ENCODE measurements at regions of chr19 and their contacts with region 1.

Region 1: GRCh38 chr19:35247526-35248306 is 1.1 kb upstream of the LSR start:
- DNase-seq: peak; percentile 92
- H3K4me3 ChIP-seq: peak overlapping the region; percentile 82
- H3K27ac ChIP-seq: peak overlapping the region; percentile 69
- H3K4me1 ChIP-seq: peaks cover 21% of the 10 kb centered on the region
- CTCF ChIP-seq: peak; percentile 71

Region 2: GRCh38 chr19:35154525-35155406 is 93.0 kb before region 1 on chr19 and contains the start of gene FXYD5:
- CTCF ChIA-PET with region 1: no interaction called
- POLR2A ChIA-PET with region 1: no interaction called
- intact Hi-C with region 1: no loop called
- DNase-seq: peak; percentile 69
- H3K4me3 ChIP-seq: peak within 1 kb of the TSS; percentile 81
- H3K27ac ChIP-seq: peak within 1 kb of the TSS; percentile 51
- H3K4me1 ChIP-seq: peaks cover 24% of the 10 kb centered on the region
- CTCF ChIP-seq: no peak
- total RNA-seq, gene FXYD5: 76.8 and 82.1 TPM in 2 replicates

Region 3: GRCh38 chr19:35213663-35214632 is 33.8 kb before region 1 on chr19:
- CTCF ChIA-PET with region 1: no interaction called
- POLR2A ChIA-PET with region 1: no interaction called
- intact Hi-C with region 1: loop called (anchors 2 kb)
- DNase-seq: peak; percentile 93
- H3K4me3 ChIP-seq: peak overlapping the region; percentile 38
- H3K27ac ChIP-seq: peak overlapping the region; percentile 83
- H3K4me1 ChIP-seq: peaks cover 77% of the 10 kb centered on the region
- CTCF ChIP-seq: no peak

Region 4: GRCh38 chr19:35269421-35270117 is 21.9 kb after region 1 on chr19:
- CTCF ChIA-PET with region 1: no interaction called
- POLR2A ChIA-PET with region 1: no interaction called
- intact Hi-C with region 1: loop called (anchors 2 kb)
- DNase-seq: peak; percentile 90
- H3K4me3 ChIP-seq: peak overlapping the region; percentile 75
- H3K27ac ChIP-seq: peak overlapping the region; percentile 61
- H3K4me1 ChIP-seq: peaks cover 43% of the 10 kb centered on the region
- CTCF ChIP-seq: peak; percentile 73

Region 5: DNA sequence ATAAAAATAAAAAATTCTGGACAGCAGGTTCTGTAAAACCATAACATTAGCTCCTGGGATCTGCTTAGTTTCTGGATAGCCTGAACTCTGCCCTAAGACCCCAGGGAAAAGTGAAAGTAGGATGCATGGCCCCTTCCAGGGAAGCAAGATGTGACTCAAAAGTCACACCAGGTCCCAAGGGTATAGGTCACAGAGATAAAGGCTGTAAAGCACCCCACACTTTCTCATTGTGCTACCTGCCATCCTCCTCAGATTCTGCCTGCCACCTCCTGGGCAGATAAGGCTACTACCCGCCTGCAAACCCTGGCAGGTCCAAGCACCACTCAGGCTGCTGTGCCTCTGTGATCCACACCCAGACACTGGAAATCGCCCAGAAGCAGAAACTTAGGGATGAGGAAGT is 220.9 kb after region 1 on chr19:
- CTCF ChIA-PET with region 1: no interaction called
- POLR2A ChIA-PET with region 1: no interaction called
- intact Hi-C with region 1: loop called (anchors 1 kb)
- DNase-seq: peak; percentile 76
- H3K4me3 ChIP-seq: no peak overlapping the region
- H3K27ac ChIP-seq: no peak overlapping the region
- H3K4me1 ChIP-seq: peaks cover 2% of the 10 kb centered on the region
- CTCF ChIP-seq: peak; percentile 81

Region 6: GRCh38 chr19:35628565-35629331 is 381.0 kb after region 1 on chr19 and contains the start of gene RBM42:
- CTCF ChIA-PET with region 1: no interaction called
- POLR2A ChIA-PET with region 1: no interaction called
- intact Hi-C with region 1: loop called (anchors 5 kb)
- DNase-seq: peak; percentile 99
- H3K4me3 ChIP-seq: peak within 1 kb of the TSS; percentile 83
- H3K27ac ChIP-seq: peak within 1 kb of the TSS; percentile 68
- H3K4me1 ChIP-seq: peaks cover 18% of the 10 kb centered on the region
- CTCF ChIP-seq: no peak
- total RNA-seq, gene RBM42: 62.0 and 73.6 TPM in 2 replicates